Dendritic cell treated with granulocyte-macrophage colony-stimulating factor and Interleukin-4, amounts not matched to agents 40 ng/mL and 50 ng/mL, for 4 days (primary cell): ENCODE measurements at regions of chr21 and their contacts with region 1.

Region 1: DNA sequence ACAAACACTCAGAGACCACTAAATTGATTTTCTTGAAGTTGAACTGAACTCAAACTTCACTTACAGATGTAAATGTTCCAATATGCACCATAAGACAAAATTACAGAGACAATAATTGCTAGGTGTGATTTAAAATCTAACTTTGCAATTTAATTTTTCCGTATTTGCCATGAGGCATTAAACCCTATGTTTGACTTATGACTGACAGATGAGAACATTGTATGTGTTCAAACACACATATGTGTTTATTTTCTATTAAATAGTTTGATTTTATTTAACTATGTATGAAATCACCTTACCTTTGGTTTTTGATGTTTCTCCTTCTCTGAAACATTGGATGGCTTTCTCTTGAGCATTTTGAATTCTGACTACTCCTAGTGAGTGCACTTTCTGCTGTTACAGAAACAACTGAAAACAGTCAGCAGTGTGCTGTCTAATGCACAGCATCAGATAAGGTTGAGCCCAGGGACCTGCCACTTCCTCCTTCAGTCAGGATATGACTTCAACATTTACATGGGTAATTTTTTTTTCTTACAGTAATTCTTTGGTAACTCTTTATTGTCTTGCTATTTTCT is at the start of gene SAMSN1:
- H3K4me3 Mint-ChIP-seq: peak within 1 kb of the TSS; percentile 73
- H3K27ac Mint-ChIP-seq: peak within 1 kb of the TSS; percentile 79
- H3K4me1 Mint-ChIP-seq: peaks cover 24% of the 10 kb centered on the region
- H3K27me3 Mint-ChIP-seq: no peaks in the 10 kb centered on the region

Region 2: GRCh38 chr21:14513804-14514203 is 32.2 kb before region 1 on chr21:
- intact Hi-C with region 1: loop called (anchors 5 kb)
- H3K4me3 Mint-ChIP-seq: no peak overlapping the region
- H3K27ac Mint-ChIP-seq: peak overlapping the region; percentile 28
- H3K4me1 Mint-ChIP-seq: peaks cover 38% of the 10 kb centered on the region
- H3K27me3 Mint-ChIP-seq: no peaks in the 10 kb centered on the region

Region 3: DNA sequence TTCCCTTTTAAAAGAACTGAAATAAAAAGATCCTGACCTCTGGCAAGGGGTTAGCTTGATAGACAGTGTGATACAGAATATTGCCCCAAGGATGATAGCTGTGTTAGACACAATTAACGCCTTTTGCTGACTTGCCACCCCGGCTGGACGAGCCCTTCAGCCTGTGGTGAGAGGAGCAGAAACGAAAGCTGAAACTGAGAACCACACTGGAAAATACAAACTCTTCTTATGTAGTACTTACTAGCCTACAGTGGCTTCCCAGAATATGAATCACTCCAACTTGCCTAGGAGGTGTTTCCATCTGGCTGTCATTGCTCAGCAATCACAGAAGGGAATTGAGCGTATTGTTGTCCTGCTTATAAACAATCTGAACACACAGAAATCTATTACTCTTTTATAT is 22.8 kb before region 1 on chr21:
- intact Hi-C with region 1: loop called (anchors 1 kb)
- H3K4me3 Mint-ChIP-seq: peak overlapping the region; percentile 65
- H3K27ac Mint-ChIP-seq: peak overlapping the region; percentile 85
- H3K4me1 Mint-ChIP-seq: peaks cover 36% of the 10 kb centered on the region
- H3K27me3 Mint-ChIP-seq: no peaks in the 10 kb centered on the region

Region 4: DNA sequence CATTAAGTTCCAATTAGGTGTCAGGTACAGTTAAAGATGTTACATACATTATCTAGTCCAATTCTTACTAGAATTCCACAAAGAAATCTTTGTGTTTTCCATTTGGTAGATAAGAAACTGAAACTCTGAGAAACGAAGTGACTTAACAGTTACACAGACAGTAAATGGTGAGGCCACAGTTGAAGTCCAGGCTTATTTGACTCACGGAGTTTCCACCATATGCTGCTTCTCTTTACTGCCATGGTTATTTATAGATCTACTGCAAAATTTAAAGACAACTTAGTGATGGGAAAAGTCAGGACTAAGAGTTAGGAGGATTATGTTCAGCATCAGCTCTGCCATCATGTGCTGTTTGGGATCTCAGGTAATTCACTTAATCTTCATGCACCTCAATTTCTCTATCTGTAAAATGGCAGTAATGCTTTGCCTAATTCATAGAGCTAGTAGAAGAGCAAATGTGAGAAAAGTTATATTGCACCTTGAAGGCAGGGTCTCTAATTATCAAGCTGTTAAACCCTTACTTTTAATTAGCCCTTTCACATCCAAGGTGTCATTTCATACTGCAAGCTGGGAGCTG is 26.3 kb after region 1 on chr21:
- intact Hi-C with region 1: no loop called
- H3K4me3 Mint-ChIP-seq: no peak overlapping the region
- H3K27ac Mint-ChIP-seq: no peak overlapping the region
- H3K4me1 Mint-ChIP-seq: peaks cover 20% of the 10 kb centered on the region
- H3K27me3 Mint-ChIP-seq: no peaks in the 10 kb centered on the region

Region 5: GRCh38 chr21:14591882-14592281 is 45.9 kb after region 1 on chr21:
- intact Hi-C with region 1: loop called (anchors 5 kb)
- H3K4me3 Mint-ChIP-seq: no peak overlapping the region
- H3K27ac Mint-ChIP-seq: peak overlapping the region; percentile 82
- H3K4me1 Mint-ChIP-seq: peaks cover 20% of the 10 kb centered on the region
- H3K27me3 Mint-ChIP-seq: no peaks in the 10 kb centered on the region

Region 6: GRCh38 chr21:14737922-14738321 is 191.9 kb after region 1 on chr21:
- intact Hi-C with region 1: loop called (anchors 1 kb)
- H3K4me3 Mint-ChIP-seq: no peak overlapping the region
- H3K27ac Mint-ChIP-seq: peak overlapping the region; percentile 43
- H3K4me1 Mint-ChIP-seq: peaks cover 25% of the 10 kb centered on the region
- H3K27me3 Mint-ChIP-seq: no peaks in the 10 kb centered on the region